Esophagus muscularis mucosa (tissue), 4 donors: ENCODE measurements at regions of chr12 and their contacts with region 1.

Region 1: DNA sequence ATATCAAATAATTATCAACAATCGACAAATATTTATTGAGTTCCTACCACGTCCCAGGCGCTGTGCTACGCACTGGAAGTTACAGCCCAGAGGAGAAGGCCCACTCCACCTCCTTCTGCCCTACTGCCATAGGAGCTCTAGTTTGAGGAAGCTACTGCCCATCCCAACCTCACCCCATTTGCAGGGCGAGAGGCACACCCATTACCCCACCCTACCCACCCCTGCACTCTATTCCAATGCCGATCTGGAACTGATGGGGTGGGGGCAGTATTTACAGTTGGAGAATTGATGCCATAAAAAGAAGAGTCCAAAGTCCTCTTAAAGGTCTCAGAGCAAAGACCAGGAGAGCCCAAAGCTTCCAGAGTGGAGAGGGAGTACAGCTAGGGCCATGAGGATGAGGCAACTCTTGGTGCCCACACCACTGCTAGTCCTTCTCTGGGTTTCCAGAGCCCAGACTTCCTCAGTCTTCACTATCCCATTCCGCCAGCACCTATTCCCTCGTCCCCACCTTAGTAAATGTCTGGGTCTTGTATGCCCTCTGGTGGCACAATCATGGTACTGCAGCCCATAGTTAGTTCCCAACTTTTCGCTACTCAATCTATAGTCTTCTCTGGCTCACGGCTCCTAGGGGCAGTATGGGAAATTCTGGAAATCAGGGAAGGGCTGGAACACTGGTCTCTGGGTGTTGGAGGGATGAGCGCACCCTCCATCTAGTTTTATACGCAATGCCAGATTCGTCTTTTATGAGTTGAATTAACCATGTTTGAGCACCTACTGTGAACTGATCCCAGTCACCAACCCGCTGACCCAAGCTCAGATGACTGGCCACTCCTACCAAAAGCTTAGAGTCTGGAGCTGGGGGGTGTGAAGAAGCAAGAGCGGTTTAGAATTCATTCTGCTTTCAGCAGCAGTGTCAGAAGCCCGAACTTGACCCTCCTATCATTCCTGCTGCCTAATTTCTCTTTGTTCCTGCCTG is 6.9 kb upstream of the ADCY6 start:
- DNase-seq: no peak
- H3K4me3 ChIP-seq: no peak overlapping the region
- H3K27ac ChIP-seq: no peak overlapping the region
- H3K4me1 ChIP-seq: peaks cover 4 to 8% (median 7%) of the 10 kb centered on the region in 4 donors
- H3K27me3 ChIP-seq: peaks cover 0 to 16% (median 6%) of the 10 kb centered on the region in 4 donors
- CTCF ChIP-seq: peak; percentile 95 to 97 (median 96)
- EP300 ChIP-seq: no peak
- POLR2A ChIP-seq: no peak

Region 2: GRCh38 chr12:48696626-48697025 is 99.1 kb before region 1 on chr12:
- intact Hi-C with region 1: no loop called
- DNase-seq: no peak
- H3K4me3 ChIP-seq: no peak overlapping the region
- H3K27ac ChIP-seq: no peak overlapping the region
- H3K4me1 ChIP-seq: peaks cover 6 to 9% (median 7%) of the 10 kb centered on the region in 4 donors
- H3K27me3 ChIP-seq: no peaks in the 10 kb centered on the region
- CTCF ChIP-seq: no peak
- EP300 ChIP-seq: no peak
- POLR2A ChIP-seq: no peak

Region 3: DNA sequence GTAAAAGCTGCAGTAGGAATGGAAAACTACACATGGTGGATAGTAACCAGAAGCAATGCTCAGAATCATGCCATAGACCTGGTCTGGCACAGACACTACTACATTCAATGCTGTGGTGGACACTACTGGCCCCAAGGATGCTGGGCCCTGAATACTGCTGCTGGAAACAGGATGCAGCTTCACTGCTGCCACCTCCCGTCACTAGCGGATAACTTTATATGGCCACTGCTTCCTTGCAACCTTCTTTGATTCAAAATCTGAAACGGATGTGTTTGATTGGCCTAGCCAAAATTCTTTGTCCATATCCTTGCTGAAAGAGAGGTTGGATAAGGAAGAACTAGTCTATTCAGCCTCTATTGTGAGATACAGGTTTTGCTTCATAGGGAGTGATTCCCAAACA is 37.5 kb before region 1 on chr12:
- intact Hi-C with region 1: loop called (anchors 1 kb)
- DNase-seq: no peak
- H3K4me3 ChIP-seq: no peak overlapping the region
- H3K27ac ChIP-seq: no peak overlapping the region
- H3K4me1 ChIP-seq: peaks cover 0 to 6% (median 2%) of the 10 kb centered on the region in 4 donors
- H3K27me3 ChIP-seq: no peaks in the 10 kb centered on the region
- CTCF ChIP-seq: no peak
- EP300 ChIP-seq: no peak
- POLR2A ChIP-seq: no peak